ENCODE measurements at regions of chr1 and their contacts with region 1.

Region 1: GRCh38 chr1:27643701-27644625 is 9.0 kb upstream of the FGR start:
- DNase-seq: no peak

Region 2: GRCh38 chr1:27616441-27616840 is 27.5 kb before region 1 on chr1:
- intact Hi-C with region 1: loop called in 1 of 2 experiments (anchors 5 kb)
- DNase-seq: no peak

Region 3: DNA sequence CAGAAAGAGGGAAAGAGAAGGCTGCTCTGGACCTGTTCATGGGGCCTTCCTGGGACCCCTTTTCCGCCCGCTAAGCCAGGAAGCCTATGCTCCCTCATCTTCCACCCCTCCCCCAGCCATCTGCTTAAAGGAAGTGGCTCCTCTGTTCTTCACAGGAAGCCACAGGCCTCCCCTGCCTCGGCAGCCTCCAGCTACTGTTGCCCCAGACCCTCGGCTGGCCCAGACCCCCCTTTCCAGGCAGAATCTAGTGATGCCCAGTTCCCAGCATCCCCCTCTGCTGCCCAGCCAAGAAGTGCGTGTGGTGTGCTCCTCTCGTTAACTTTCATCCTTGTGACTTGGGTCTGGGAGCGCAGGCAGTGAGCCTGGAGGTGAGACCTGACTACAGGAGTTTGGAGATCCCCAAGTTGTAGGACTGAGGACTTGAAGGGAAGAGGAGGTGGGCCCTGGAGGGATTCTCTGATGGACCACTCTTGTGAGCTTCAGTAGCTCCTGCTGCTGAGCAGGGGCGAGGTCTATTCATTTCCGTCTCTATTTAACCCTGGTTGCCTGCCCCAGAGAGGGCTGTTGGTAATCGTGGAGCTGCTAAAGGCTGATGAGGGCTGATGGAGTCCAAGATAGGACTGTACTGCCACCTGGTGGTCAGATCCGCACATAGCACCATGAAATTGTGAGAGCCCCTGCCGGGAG is 18.9 kb after region 1 on chr1:
- intact Hi-C with region 1: loop called in 1 of 2 experiments (anchors 1 kb)
- DNase-seq: peak; percentile 91

Region 4: GRCh38 chr1:27922272-27922671 is 278.3 kb after region 1 on chr1:
- intact Hi-C with region 1: loop called in 1 of 2 experiments (anchors 5 kb)
- DNase-seq: no peak